HepG2 (cell line): ENCODE measurements at regions of chr2 and their contacts with region 1.

Region 1: GRCh38 chr2:37324786-37325624 is at the start of gene PRKD3:
- DNase-seq: peak; percentile 27
- ATAC-seq: peak; percentile 90
- H3K4me3 ChIP-seq: peak within 1 kb of the TSS; percentile 85 to 98 (median 90)
- H3K27ac ChIP-seq: peak within 1 kb of the TSS; percentile 63
- H3K4me1 ChIP-seq: peaks cover 32% of the 10 kb centered on the region
- H3K27me3 ChIP-seq: peaks cover 3 to 20% of the 10 kb centered on the region in 2 experiments; a peak in 4 of 5 replicates
- CTCF ChIP-seq: no peak
- EP300 ChIP-seq: no peak
- POLR2A ChIP-seq: no peak
- RAD21 ChIP-seq: no peak
- total RNA-seq, gene PRKD3: 38.4 and 58.2 TPM in 2 replicates

Region 2: GRCh38 chr2:37306024-37306423 is 19.0 kb before region 1 on chr2:
- CTCF ChIA-PET with region 1: no interaction called
- POLR2A ChIA-PET with region 1: no interaction called
- in situ Hi-C with region 1: no loop called
- intact Hi-C with region 1: loop called (anchors 2 kb)
- DNase-seq: no peak
- ATAC-seq: no peak
- H3K4me3 ChIP-seq: no peak overlapping the region
- H3K27ac ChIP-seq: no peak overlapping the region
- H3K4me1 ChIP-seq: peaks cover 5% of the 10 kb centered on the region; the same call in 1 of the 2 replicates
- H3K27me3 ChIP-seq: no peaks in the 10 kb centered on the region
- CTCF ChIP-seq: no peak
- EP300 ChIP-seq: no peak
- POLR2A ChIP-seq: no peak
- RAD21 ChIP-seq: no peak

Region 3: DNA sequence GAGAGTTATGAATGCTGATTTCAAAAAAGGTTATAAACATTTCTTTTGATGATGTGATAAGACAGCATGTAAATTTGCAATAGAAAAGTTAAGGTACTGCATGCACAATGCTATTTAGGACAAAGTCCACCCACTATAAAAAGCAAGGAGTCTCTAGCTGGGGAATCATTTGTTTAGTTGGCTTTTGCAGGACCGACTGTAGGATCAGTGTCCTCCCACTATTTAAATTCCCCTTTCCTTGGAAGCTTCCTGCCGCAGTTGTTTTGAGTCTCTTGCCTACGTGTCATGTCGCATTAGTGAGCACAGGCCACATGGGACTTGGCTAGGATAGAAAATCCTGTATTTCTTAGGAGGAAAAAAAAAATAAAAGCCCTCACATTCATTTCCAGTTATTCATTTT is 32.5 kb after region 1 on chr2:
- CTCF ChIA-PET with region 1: no interaction called
- POLR2A ChIA-PET with region 1: no interaction called
- in situ Hi-C with region 1: no loop called
- intact Hi-C with region 1: no loop called
- DNase-seq: no peak
- ATAC-seq: no peak
- H3K4me3 ChIP-seq: no peak overlapping the region
- H3K27ac ChIP-seq: no peak overlapping the region
- H3K4me1 ChIP-seq: no peaks in the 10 kb centered on the region
- H3K27me3 ChIP-seq: peaks cover 0 to 16% of the 10 kb centered on the region in 2 experiments; a peak in 3 of 5 replicates
- CTCF ChIP-seq: no peak
- EP300 ChIP-seq: no peak
- POLR2A ChIP-seq: no peak
- RAD21 ChIP-seq: no peak